ENCODE measurements at regions of chr5 and their contacts with region 1.

Region 1: DNA sequence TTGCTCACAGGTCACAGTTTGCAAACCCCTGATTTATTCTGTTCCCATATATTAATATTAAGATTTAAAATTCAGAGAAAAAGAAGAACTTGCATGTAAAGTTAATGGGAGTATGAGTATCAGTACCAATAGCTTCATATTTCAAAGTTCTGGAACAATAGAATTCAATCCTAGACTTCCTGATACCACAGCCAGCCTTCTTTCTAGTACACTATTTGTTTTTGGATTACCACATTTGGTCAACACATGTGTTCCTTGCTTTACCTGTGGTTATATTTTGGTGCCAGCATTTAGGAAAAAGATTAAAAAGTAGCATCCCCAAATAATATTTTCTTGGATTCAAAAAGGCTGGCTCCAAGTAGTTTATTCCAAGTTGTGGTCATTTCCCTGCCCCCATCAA is 49.5 kb downstream of the SPINK5 start:
- DNase-seq: no peak
- ATAC-seq: no peak
- H3K4me3 ChIP-seq: no peak overlapping the region
- H3K27ac ChIP-seq: no peak overlapping the region
- H3K4me1 ChIP-seq: no peaks in the 10 kb centered on the region
- H3K27me3 ChIP-seq: no peaks in the 10 kb centered on the region
- CTCF ChIP-seq: no peak

Region 2: DNA sequence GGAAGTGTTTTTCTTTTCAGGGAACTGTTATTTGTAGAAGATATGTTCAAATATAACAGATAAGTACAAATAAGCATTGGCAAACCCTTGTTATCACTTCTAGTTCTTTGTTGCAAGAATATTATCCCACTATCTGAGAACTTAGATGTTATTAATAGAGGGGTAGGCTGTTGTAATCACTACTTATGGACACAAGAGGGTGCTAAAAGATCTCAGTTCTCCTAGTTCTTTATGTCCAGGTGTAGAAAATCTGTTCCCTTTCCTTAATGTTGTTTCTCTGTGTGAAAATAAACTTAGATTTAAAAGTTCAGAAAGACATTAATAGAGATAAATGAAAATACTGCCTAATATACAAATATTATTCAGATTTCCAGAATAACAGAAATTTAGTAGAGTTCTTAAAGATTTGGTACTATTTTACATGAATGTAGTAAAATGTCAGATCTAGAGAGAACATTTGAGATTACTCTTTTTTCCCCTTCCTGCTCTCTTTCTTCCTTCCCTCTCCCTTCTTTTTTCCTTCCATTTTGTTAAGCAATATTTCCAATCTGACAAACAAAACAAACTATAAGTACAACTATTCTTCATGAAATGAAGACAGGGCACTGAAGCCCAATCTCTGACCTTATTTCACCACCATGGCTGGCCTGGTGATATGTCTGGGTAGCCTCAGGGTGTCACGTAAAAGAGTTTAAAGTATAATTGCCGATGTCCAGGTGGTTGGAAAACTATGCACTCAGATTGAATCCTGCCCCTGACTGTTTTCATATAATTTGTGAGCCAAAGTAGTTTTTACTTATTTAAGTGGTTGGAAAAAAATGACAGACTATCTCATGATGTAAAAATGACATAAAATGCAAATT is 163.3 kb before region 1 on chr5:
- intact Hi-C with region 1: loop called in 1 of 2 experiments (anchors 10 kb)
- DNase-seq: peak in 1 of 4 donors; percentile 47
- ATAC-seq: peak; percentile 89
- H3K4me3 ChIP-seq: no peak overlapping the region
- H3K27ac ChIP-seq: no peak overlapping the region
- H3K4me1 ChIP-seq: no peaks in the 10 kb centered on the region
- H3K27me3 ChIP-seq: no peaks in the 10 kb centered on the region
- CTCF ChIP-seq: peak; percentile 57 to 71

Region 3: GRCh38 chr5:148491015-148491792 is 378.0 kb after region 1 on chr5:
- intact Hi-C with region 1: no loop called
- DNase-seq: no peak
- ATAC-seq: no peak
- H3K4me3 ChIP-seq: no peak overlapping the region
- H3K27ac ChIP-seq: no peak overlapping the region
- H3K4me1 ChIP-seq: no peaks in the 10 kb centered on the region
- H3K27me3 ChIP-seq: no peaks in the 10 kb centered on the region
- CTCF ChIP-seq: no peak

Measured in left lung (tissue), 14 donors.